Activated CD8-positive, alpha-beta memory T cell treated with anti-CD3 and anti-CD28 coated beads, Interleukin-2, amount 10 ng/mL, durations not matched to agents 7 days and 5 days (primary cell): ENCODE measurements at regions of chr20 and their contacts with region 1.

Region 1: GRCh38 chr20:1108437-1108920 is 9.9 kb upstream of the PSMF1 start:
- DNase-seq: peak; percentile 65
- ATAC-seq: peak; percentile 75
- H3K4me3 Mint-ChIP-seq: no peak overlapping the region
- H3K27ac Mint-ChIP-seq: no peak overlapping the region
- H3K4me1 Mint-ChIP-seq: peaks cover 3% of the 10 kb centered on the region
- H3K27me3 Mint-ChIP-seq: no peaks in the 10 kb centered on the region

Region 2: GRCh38 chr20:815914-816606 is 292.4 kb before region 1 on chr20:
- CTCF ChIA-PET with region 1: interaction called, 11 read pairs
- DNase-seq: peak; percentile 70
- ATAC-seq: peak; percentile 48
- H3K4me3 Mint-ChIP-seq: no peak overlapping the region
- H3K27ac Mint-ChIP-seq: no peak overlapping the region
- H3K4me1 Mint-ChIP-seq: peaks cover 5% of the 10 kb centered on the region
- H3K27me3 Mint-ChIP-seq: peaks cover 5% of the 10 kb centered on the region

Region 3: GRCh38 chr20:1118336-1119127 is 10.1 kb after region 1 on chr20 and contains the start of gene PSMF1:
- CTCF ChIA-PET with region 1: interaction called, 13 read pairs
- DNase-seq: peak; percentile 96
- ATAC-seq: peak; percentile 97
- H3K4me3 Mint-ChIP-seq: peak within 1 kb of the TSS; percentile 92
- H3K27ac Mint-ChIP-seq: peak within 1 kb of the TSS; percentile 86
- H3K4me1 Mint-ChIP-seq: peaks cover 53% of the 10 kb centered on the region
- H3K27me3 Mint-ChIP-seq: no peaks in the 10 kb centered on the region
- total RNA-seq, gene PSMF1: 146 to 147 TPM